ENCODE measurements at regions of chr9 and their contacts with region 1.

Region 1: DNA sequence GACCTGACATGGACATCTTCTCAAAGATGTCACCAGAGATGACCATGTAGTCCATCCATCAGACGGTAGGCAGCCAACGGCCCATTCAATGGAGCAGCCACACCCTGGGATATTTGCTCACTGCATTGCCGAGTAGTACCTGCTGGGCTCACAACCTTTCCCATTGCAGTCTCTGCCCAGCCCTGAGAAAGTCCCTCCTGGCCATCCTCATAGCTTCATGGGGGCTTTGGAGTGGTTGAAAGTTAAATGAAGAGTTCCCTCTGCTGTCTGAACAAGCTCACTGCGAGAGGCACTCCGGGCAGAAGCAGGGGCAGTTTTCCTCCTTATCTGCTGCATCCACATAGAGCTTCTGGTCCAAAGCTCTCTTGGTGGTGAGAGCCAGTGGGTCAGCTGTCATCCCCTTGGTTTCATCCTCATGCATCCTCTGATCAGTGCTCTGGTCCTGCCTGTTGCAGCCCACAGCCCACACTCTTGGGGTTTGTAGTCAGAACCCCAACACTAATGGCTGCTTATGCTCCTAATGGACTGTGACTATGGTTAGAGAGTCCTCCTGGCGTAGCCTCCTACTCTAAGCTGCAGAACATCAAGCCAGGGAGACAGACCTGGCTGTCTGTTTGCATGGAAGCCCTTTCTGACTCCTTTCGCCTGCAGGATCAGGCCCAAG is 23.4 kb downstream of the TNFSF8 start:
- H3K4me3 ChIP-seq: no peak overlapping the region
- H3K27ac ChIP-seq: peak overlapping the region; percentile 9; the same call in 1 of the 2 replicates
- H3K4me1 ChIP-seq: peaks cover 9% of the 10 kb centered on the region
- CTCF ChIP-seq: peak; percentile 49

Region 2: DNA sequence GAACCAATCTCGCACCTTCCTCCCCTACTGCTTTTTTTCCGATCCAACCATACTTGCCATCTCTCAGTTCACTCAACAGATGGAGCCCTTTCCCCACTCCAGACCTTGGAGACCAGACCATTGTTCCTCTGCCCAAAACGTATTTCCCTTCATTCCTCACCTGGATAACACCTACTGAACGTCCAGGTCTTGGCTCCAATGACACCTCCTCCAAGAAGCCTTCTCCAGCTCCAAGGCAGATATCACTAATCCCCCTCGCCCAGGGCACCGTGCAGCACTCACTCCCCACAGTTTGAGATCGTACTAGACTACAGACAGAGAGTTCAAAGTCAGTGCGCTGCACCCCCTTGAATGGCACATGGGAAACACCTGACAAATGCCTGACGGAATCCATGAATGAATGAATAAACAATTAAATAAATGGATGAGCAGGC is 472.1 kb before region 1 on chr9:
- CTCF ChIA-PET with region 1: interaction called, 13 read pairs
- POLR2A ChIA-PET with region 1: no interaction called
- H3K4me3 ChIP-seq: no peak overlapping the region
- H3K27ac ChIP-seq: no peak overlapping the region
- H3K4me1 ChIP-seq: no peaks in the 10 kb centered on the region
- CTCF ChIP-seq: peak; percentile 86

Region 3: DNA sequence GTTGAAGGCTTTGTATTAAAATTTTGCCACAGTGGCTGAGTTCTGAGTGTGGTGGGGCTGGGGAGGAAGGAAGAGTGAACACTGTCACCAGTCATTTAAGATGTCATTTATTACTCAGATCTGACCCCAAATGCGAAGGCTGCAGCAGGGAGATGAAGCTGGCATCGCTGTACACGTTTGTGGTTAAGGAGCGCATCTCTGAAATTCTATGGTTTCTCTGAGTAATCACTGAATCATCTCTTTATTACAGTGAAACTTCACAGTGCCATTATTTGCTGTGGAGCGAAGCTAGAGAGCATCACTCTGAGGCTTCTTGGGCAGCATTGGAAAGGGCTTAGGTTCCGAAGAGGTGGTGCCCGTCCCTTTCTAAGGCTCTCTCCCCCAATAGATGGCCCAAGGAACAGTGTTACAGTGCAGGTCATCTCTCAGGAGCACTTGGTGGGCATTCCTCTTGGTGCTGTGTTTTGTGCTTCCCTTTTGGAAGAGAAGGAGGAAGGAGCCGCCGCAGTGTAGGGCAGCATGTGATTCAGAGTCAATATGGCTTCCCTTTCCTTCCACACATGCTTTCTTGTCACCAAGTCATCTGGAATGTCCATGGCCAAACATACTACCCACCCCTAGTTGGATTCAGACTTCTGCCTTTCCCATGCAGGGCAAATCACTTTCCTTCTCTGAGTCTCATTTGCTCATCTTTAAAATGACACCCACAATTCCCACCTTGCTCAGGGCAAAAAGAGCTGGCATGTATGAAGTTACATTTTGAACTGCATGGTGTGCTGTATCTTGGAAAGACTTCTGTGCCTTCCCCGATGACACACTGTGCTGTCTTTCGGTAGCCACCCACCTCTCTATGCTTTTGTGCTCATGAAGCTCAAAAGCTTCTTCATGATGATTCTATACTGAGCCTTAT is 215.7 kb before region 1 on chr9:
- CTCF ChIA-PET with region 1: interaction called, 14 read pairs
- POLR2A ChIA-PET with region 1: no interaction called
- H3K4me3 ChIP-seq: no peak overlapping the region
- H3K27ac ChIP-seq: no peak overlapping the region
- H3K4me1 ChIP-seq: no peaks in the 10 kb centered on the region
- CTCF ChIP-seq: no peak

Region 4: DNA sequence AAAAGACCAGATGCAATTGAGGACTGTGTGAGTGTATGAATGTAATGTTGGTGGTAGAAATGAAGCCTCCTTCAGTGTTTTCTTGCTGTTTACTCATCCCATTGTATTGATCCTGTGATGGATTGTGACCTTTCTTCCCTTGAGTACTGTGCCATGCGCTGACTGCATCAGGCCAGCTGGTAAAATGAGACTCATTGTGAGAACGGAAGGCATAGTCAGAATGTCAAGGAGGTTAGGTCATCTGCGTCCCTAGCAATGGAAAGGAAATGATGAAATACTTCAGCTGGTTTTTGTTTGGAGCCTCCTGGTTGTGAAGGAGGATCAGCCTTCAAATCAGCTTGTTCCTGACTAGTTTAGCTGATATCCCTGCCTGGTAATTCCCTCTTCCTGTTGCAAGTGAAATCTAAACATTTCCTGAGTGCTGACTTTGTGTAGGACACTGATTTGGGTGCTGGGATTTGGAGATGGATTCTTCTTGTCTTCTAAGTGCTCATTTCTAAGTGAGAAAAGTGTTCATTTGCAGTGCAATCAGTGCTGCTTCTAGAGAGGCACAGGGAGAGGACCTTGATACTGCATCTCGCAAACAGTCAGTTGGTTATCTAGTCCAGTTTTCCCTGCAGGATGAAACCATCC is 12.1 kb before region 1 on chr9:
- CTCF ChIA-PET with region 1: interaction called, 16 read pairs
- POLR2A ChIA-PET with region 1: interaction called, 4 read pairs
- H3K4me3 ChIP-seq: no peak overlapping the region
- H3K27ac ChIP-seq: no peak overlapping the region
- H3K4me1 ChIP-seq: no peaks in the 10 kb centered on the region
- CTCF ChIP-seq: no peak

Region 5: GRCh38 chr9:114925672-114926071 is 18.6 kb after region 1 on chr9:
- CTCF ChIA-PET with region 1: interaction called, 41 read pairs
- POLR2A ChIA-PET with region 1: no interaction called
- H3K4me3 ChIP-seq: no peak overlapping the region
- H3K27ac ChIP-seq: no peak overlapping the region
- H3K4me1 ChIP-seq: no peaks in the 10 kb centered on the region
- CTCF ChIP-seq: no peak

Region 6: GRCh38 chr9:115013998-115014397 is 107.0 kb after region 1 on chr9:
- CTCF ChIA-PET with region 1: interaction called, 138 read pairs
- POLR2A ChIA-PET with region 1: no interaction called
- H3K4me3 ChIP-seq: no peak overlapping the region
- H3K27ac ChIP-seq: no peak overlapping the region
- H3K4me1 ChIP-seq: peaks cover 3% of the 10 kb centered on the region; the same call in 1 of the 2 replicates
- CTCF ChIP-seq: peak; percentile 61

Region 7: DNA sequence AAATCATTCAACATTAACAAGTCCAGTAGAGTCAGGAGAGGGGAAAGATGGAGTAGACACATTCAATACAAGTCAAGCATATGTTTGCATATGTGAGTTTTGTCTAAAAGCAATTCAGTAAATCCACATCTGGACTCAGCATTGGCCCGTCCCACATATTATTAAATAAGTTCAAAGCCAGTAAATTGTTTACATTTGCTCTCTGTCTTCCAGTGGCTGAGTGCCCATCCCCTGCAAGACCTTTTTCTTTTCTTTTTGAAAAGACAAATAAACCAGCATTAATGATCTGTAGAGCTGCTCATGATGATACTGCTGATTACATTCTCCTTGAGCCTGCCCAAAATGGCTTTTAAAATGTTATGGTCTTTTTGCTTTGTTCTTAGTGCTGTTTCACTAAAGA is 139.8 kb after region 1 on chr9:
- CTCF ChIA-PET with region 1: no interaction called
- POLR2A ChIA-PET with region 1: no interaction called
- H3K4me3 ChIP-seq: no peak overlapping the region
- H3K27ac ChIP-seq: no peak overlapping the region
- H3K4me1 ChIP-seq: no peaks in the 10 kb centered on the region
- CTCF ChIP-seq: no peak